B cell (primary cell): ENCODE measurements at regions of chr16 and their contacts with region 1.

Region 1: GRCh38 chr16:30893744-30894539 is at the start of gene BCL7C:
- DNase-seq: peak; percentile 85
- ATAC-seq: peak; percentile 80
- H3K4me3 ChIP-seq: peak within 1 kb of the TSS; percentile 11 to 72 (median 65)
- H3K4me3 Mint-ChIP-seq: peak within 1 kb of the TSS; percentile 91
- H3K27ac ChIP-seq: peak within 1 kb of the TSS; percentile 63 to 79
- H3K27ac Mint-ChIP-seq: peak within 1 kb of the TSS; percentile 93
- H3K4me1 ChIP-seq: peaks cover 32 to 43% of the 10 kb centered on the region in 2 donors
- H3K4me1 Mint-ChIP-seq: peaks cover 48% of the 10 kb centered on the region
- H3K27me3 ChIP-seq: no peaks in the 10 kb centered on the region
- H3K27me3 Mint-ChIP-seq: no peaks in the 10 kb centered on the region
- CTCF ChIP-seq: no peak
- total RNA-seq, gene BCL7C: 30.5 and 31.6 TPM in 2 replicates

Region 2: GRCh38 chr16:30747799-30748634 is 145.9 kb before region 1 on chr16 and contains the start of gene PHKG2:
- CTCF ChIA-PET with region 1: no interaction called
- POLR2A ChIA-PET with region 1: no interaction called
- intact Hi-C with region 1: loop called (anchors 1 kb)
- DNase-seq: peak; percentile 98
- ATAC-seq: peak; percentile 99
- H3K4me3 ChIP-seq: peak within 1 kb of the TSS; percentile 22 to 84 (median 69)
- H3K4me3 Mint-ChIP-seq: peak within 1 kb of the TSS; percentile 92
- H3K27ac ChIP-seq: peak within 1 kb of the TSS; percentile 45 to 75
- H3K27ac Mint-ChIP-seq: peak within 1 kb of the TSS; percentile 93
- H3K4me1 ChIP-seq: peaks cover 3 to 5% of the 10 kb centered on the region in 2 donors
- H3K4me1 Mint-ChIP-seq: peaks cover 19% of the 10 kb centered on the region
- H3K27me3 ChIP-seq: no peaks in the 10 kb centered on the region
- H3K27me3 Mint-ChIP-seq: no peaks in the 10 kb centered on the region
- CTCF ChIP-seq: no peak
- total RNA-seq, gene PHKG2: 54.1 and 55.7 TPM in 2 replicates

Region 3: GRCh38 chr16:30844671-30845449 is 49.1 kb before region 1 on chr16:
- CTCF ChIA-PET with region 1: interaction called, 25 read pairs
- POLR2A ChIA-PET with region 1: interaction called, 4 read pairs
- intact Hi-C with region 1: loop called (anchors 1 kb)
- DNase-seq: peak; percentile 89
- ATAC-seq: peak; percentile 88
- H3K4me3 ChIP-seq: peak overlapping the region in 1 of 5 experiments; percentile 11
- H3K4me3 Mint-ChIP-seq: peak overlapping the region; percentile 76
- H3K27ac ChIP-seq: no peak overlapping the region
- H3K27ac Mint-ChIP-seq: peak overlapping the region; percentile 88
- H3K4me1 ChIP-seq: peaks cover 6 to 9% of the 10 kb centered on the region in 2 donors
- H3K4me1 Mint-ChIP-seq: peaks cover 9% of the 10 kb centered on the region
- H3K27me3 ChIP-seq: no peaks in the 10 kb centered on the region
- H3K27me3 Mint-ChIP-seq: peaks cover 3% of the 10 kb centered on the region
- CTCF ChIP-seq: peak; percentile 88

Region 4: DNA sequence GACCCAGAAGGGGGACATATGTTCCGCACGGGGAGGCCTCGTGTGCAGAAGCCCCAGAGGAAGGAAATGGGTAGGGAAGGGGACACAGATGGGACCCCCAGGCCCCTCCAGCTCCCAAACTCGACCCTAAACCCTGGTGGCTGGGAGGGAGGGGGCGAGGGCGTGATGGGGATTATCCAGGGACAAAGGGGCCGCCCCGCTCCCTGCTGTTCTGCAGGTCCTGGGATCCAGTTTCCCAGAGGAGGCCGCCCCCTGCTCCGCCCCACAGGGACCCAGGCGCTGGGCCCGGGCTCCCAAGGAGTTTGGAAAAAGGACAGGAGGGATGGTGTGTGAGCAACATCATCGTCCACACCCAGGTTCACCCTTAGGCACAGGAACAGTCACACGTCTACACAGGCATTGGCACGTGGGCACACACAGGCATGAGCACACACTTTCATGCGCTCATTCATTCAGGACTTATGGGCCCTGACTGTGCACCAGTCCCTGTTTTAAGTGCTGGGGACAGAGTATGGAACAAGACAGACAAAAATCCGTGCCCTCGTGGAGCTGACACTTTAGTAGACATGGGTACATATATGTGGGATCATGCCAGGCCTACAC is 16.6 kb after region 1 on chr16:
- CTCF ChIA-PET with region 1: no interaction called
- POLR2A ChIA-PET with region 1: no interaction called
- intact Hi-C with region 1: no loop called
- DNase-seq: no peak
- ATAC-seq: no peak
- H3K4me3 ChIP-seq: no peak overlapping the region
- H3K4me3 Mint-ChIP-seq: no peak overlapping the region
- H3K27ac ChIP-seq: no peak overlapping the region
- H3K27ac Mint-ChIP-seq: no peak overlapping the region
- H3K4me1 ChIP-seq: no peaks in the 10 kb centered on the region
- H3K4me1 Mint-ChIP-seq: peaks cover 3% of the 10 kb centered on the region
- H3K27me3 ChIP-seq: no peaks in the 10 kb centered on the region
- H3K27me3 Mint-ChIP-seq: no peaks in the 10 kb centered on the region
- CTCF ChIP-seq: no peak

Region 5: GRCh38 chr16:30957456-30958174 is 63.7 kb after region 1 on chr16 and contains the start of gene SETD1A:
- CTCF ChIA-PET with region 1: no interaction called
- POLR2A ChIA-PET with region 1: no interaction called
- intact Hi-C with region 1: loop called (anchors 1 kb)
- DNase-seq: peak; percentile 99
- ATAC-seq: peak; percentile 83
- H3K4me3 ChIP-seq: peak within 1 kb of the TSS; percentile 85 to 99 (median 95)
- H3K4me3 Mint-ChIP-seq: peak within 1 kb of the TSS; percentile 97
- H3K27ac ChIP-seq: peak within 1 kb of the TSS; percentile 92 to 96
- H3K27ac Mint-ChIP-seq: peak within 1 kb of the TSS; percentile 99
- H3K4me1 ChIP-seq: peaks cover 15 to 25% of the 10 kb centered on the region in 2 donors
- H3K4me1 Mint-ChIP-seq: peaks cover 40% of the 10 kb centered on the region
- H3K27me3 ChIP-seq: no peaks in the 10 kb centered on the region
- H3K27me3 Mint-ChIP-seq: no peaks in the 10 kb centered on the region
- CTCF ChIP-seq: no peak
- total RNA-seq, gene SETD1A: 37.2 and 39.5 TPM in 2 replicates

Region 6: DNA sequence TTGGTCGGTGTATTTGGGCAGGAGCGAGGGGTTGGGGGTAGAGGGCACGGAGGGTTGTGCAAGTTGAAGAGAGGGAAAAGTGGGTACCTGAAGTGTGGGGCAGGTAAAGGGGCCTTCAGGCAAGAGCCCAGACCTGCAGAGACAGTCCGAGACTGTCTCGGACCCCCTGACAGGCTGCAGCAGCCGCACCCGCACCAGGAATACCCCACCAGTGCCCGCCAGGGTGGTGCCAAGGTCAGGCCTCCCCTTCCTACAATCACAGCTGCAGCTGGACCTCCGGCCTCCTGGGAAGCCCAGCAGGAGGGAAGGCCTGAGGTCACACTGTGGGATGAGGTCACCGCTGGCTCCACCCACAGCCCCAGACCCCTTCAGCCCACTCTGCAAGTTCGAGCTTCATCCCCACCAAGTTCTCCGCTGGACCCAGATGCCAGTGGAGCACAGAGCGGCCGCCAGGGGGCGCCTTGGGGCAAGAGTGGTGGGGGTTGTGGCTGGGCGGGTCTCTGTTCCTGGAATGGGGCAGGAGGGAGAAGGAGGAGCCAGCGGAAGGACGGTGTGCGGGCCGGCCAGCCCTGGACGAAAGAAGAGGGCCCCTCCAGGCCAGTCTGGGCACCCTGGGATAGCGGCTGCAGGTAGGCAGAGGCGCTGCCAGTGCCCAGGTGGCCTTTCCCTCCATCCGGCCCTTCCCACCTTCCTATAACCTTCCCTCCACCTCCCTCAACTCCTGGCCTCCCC is 90.9 kb after region 1 on chr16 and contains the start of gene HSD3B7:
- CTCF ChIA-PET with region 1: no interaction called
- POLR2A ChIA-PET with region 1: no interaction called
- intact Hi-C with region 1: no loop called
- DNase-seq: peak; percentile 81
- ATAC-seq: peak; percentile 81
- H3K4me3 ChIP-seq: no peak within 1 kb of the TSS
- H3K4me3 Mint-ChIP-seq: no peak within 1 kb of the TSS
- H3K27ac ChIP-seq: no peak within 1 kb of the TSS
- H3K27ac Mint-ChIP-seq: no peak within 1 kb of the TSS
- H3K4me1 ChIP-seq: peaks cover 3 to 6% of the 10 kb centered on the region in 2 donors
- H3K4me1 Mint-ChIP-seq: no peaks in the 10 kb centered on the region
- H3K27me3 ChIP-seq: no peaks in the 10 kb centered on the region
- H3K27me3 Mint-ChIP-seq: no peaks in the 10 kb centered on the region
- CTCF ChIP-seq: peak; percentile 90
- total RNA-seq, gene HSD3B7: 1.0 and 1.2 TPM in 2 replicates